H1 (cell line): ENCODE measurements at regions of chr10 and their contacts with region 1.

Region 1: GRCh38 chr10:122525788-122526187 is 34.8 kb upstream of the DMBT1 start:
- DNase-seq: no peak
- H3K4me3 ChIP-seq: no peak overlapping the region
- H3K27ac ChIP-seq: no peak overlapping the region
- H3K4me1 ChIP-seq: no peaks in the 10 kb centered on the region; a peak in 1 of 7 replicates
- H3K27me3 ChIP-seq: no peaks in the 10 kb centered on the region
- CTCF ChIP-seq: peak in 2 of 3 experiments; percentile 20 to 25; a peak in 2 of 4 replicates
- EP300 ChIP-seq: no peak
- POLR2A ChIP-seq: no peak
- RAD21 ChIP-seq: peak; percentile 57 to 61

Region 2: DNA sequence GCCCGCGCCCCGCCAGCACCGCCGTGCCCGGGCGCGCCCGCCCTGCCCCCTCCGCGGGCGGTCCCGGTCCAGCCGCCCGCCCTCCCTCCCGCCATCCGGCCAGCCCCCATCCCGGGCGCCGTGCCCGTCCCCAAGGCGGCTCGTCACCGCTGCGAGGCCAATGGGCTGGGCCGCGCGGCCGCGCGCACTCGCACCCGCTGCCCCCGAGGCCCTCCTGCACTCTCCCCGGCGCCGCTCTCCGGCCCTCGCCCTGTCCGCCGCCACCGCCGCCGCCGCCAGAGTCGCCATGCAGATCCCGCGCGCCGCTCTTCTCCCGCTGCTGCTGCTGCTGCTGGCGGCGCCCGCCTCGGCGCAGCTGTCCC is 64.4 kb before region 1 on chr10 and contains the start of gene HTRA1:
- CTCF ChIA-PET with region 1: no interaction called
- POLR2A ChIA-PET with region 1: no interaction called
- DNase-seq: no peak
- H3K4me3 ChIP-seq: peak within 1 kb of the TSS; percentile 44 to 67 (median 54)
- H3K27ac ChIP-seq: no peak within 1 kb of the TSS
- H3K4me1 ChIP-seq: peaks cover 0 to 20% (median 5%) of the 10 kb centered on the region in 4 experiments; a peak in 6 of 7 replicates
- H3K27me3 ChIP-seq: peaks cover 25 to 47% (median 41%) of the 10 kb centered on the region in 4 experiments
- CTCF ChIP-seq: no peak
- EP300 ChIP-seq: no peak
- POLR2A ChIP-seq: no peak
- RAD21 ChIP-seq: no peak
- total RNA-seq, gene HTRA1: 15.8 and 16.5 TPM in 2 replicates

Region 3: DNA sequence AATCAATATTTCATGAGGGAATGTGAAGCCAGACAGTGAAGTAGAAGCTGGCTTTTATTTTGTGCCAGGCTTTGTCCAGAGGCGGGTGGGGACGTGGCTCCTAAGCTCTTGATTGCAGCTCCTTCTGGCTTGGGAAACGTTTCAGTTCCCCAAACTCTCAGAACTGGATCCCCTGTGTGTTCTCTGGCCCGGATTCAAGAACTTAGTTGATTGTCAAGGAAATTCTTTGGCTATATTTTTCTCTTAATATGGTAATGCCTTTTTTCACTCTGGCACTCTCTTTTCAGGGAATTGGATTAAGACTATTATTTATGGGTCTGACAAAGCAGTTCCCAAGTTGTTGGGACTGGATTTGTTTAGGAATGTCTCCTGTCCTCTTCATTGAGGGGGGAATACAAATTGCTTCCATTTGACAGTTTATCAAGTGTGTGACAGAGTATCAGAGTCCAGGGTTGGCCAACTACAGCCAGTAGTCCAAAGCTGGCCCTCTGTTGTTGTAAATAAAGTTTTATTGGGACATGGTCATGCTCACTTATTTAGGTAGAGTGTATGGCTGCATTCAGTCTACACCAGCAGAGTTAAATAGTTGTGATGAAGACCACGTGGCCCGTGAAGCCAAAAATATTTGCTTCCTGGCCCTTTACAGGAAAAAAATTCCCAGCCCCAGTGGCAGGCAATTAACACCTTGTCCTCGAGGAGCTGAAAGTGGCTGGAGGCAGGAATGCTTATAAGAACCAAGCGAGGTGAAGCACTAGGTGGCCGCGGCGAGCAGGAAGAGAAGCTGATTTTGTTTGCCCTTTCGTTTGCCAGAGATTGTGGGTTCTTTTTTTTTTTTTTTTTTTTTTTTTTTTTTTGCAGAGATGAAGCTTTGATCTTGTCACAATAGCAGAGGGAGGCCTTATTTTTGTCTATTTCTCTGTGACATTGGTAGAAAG is 30.1 kb before region 1 on chr10:
- CTCF ChIA-PET with region 1: interaction called, 13 read pairs
- POLR2A ChIA-PET with region 1: no interaction called
- DNase-seq: no peak
- H3K4me3 ChIP-seq: no peak overlapping the region
- H3K27ac ChIP-seq: no peak overlapping the region
- H3K4me1 ChIP-seq: no peaks in the 10 kb centered on the region; a peak in 1 of 7 replicates
- H3K27me3 ChIP-seq: no peaks in the 10 kb centered on the region; a peak in 1 of 7 replicates
- CTCF ChIP-seq: no peak
- EP300 ChIP-seq: no peak
- POLR2A ChIP-seq: no peak
- RAD21 ChIP-seq: no peak; a peak in 1 of 4 replicates

Region 4: DNA sequence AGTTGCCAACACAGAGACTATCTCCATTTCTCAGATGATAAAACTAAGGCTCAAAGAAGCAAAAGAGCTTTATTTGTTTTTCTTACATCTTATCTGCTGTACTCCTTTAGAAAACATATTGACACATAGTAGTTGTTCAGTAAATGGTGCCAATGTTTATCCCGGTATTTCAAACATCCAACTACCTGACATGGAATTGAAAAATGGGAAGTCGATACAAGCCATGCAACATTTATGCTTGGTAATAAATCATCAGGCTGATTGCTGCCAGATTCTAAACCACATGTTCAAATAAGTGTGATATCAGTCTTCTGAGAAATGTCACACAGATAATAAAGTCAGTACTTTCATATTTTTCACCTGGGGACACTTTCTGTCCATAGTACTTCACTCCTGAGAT is 239.6 kb after region 1 on chr10:
- CTCF ChIA-PET with region 1: no interaction called
- POLR2A ChIA-PET with region 1: no interaction called
- DNase-seq: no peak
- H3K4me3 ChIP-seq: no peak overlapping the region
- H3K27ac ChIP-seq: no peak overlapping the region
- H3K4me1 ChIP-seq: no peaks in the 10 kb centered on the region
- H3K27me3 ChIP-seq: no peaks in the 10 kb centered on the region
- CTCF ChIP-seq: no peak
- EP300 ChIP-seq: no peak
- POLR2A ChIP-seq: no peak
- RAD21 ChIP-seq: no peak